Activated CD8-positive, alpha-beta memory T cell treated with anti-CD3 and anti-CD28 coated beads, Interleukin-2, amount 10 ng/mL, durations not matched to agents 7 days and 5 days (primary cell): ENCODE measurements at regions of chr6 and their contacts with region 1.

Region 1: DNA sequence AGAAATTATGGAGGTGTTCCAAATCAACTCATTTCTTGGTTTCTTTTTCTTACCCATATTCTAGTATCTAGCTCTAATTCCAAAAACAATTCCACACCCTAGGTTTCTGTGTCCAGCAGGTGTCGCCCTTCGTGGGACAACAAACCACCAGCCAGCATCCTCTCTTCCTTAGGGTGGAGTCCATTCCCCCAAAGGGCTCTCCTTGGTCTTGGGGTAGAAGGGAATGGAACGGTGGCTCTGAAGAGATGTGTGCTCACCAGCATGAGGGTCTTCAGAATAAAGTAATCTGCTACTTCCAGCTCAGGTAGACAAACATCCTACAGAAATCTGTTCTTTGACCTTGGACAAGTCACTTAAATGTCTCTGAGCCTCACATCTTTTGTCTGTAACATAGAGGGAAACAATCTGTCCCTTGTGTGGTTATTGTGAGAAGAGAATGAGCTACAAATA is 7.2 kb downstream of the HLA-DMB start:
- DNase-seq: peak; percentile 83
- ATAC-seq: peak; percentile 67
- H3K4me3 Mint-ChIP-seq: no peak overlapping the region
- H3K27ac Mint-ChIP-seq: no peak overlapping the region
- H3K4me1 Mint-ChIP-seq: peaks cover 23% of the 10 kb centered on the region
- H3K27me3 Mint-ChIP-seq: no peaks in the 10 kb centered on the region

Region 2: GRCh38 chr6:32609731-32610640 is 323.7 kb before region 1 on chr6:
- CTCF ChIA-PET with region 1: no interaction called
- DNase-seq: peak; percentile 72
- ATAC-seq: peak; percentile 98
- H3K4me3 Mint-ChIP-seq: no peak overlapping the region
- H3K27ac Mint-ChIP-seq: no peak overlapping the region
- H3K4me1 Mint-ChIP-seq: peaks cover 21% of the 10 kb centered on the region
- H3K27me3 Mint-ChIP-seq: no peaks in the 10 kb centered on the region

Region 3: GRCh38 chr6:32894080-32895005 is 39.3 kb before region 1 on chr6:
- CTCF ChIA-PET with region 1: interaction called, 17 read pairs
- DNase-seq: peak; percentile 96
- ATAC-seq: peak; percentile 99
- H3K4me3 Mint-ChIP-seq: peak overlapping the region; percentile 99
- H3K27ac Mint-ChIP-seq: peak overlapping the region; percentile 94
- H3K4me1 Mint-ChIP-seq: peaks cover 37% of the 10 kb centered on the region
- H3K27me3 Mint-ChIP-seq: peaks cover 4% of the 10 kb centered on the region

Region 4: DNA sequence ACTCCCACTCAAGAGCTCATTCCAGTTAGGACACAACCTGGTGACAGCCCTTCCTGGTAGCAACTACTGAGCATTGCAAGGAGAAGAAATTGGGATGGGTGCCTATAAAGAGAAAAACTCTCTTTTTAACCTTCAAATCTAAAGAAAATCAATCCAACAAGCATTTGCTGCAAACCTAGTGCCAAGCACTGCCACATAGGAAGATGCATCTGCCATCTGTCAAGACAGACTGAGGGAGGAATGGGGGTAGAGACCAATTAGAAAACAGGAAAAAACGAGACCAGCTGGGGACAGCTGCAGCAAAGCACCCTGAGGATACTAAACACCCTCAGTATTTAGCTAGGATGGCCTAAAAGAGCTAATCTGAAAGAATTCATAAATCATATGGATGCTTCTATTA is 20.7 kb before region 1 on chr6:
- CTCF ChIA-PET with region 1: interaction called, 22 read pairs
- DNase-seq: no peak
- ATAC-seq: no peak
- H3K4me3 Mint-ChIP-seq: no peak overlapping the region
- H3K27ac Mint-ChIP-seq: no peak overlapping the region
- H3K4me1 Mint-ChIP-seq: peaks cover 5% of the 10 kb centered on the region
- H3K27me3 Mint-ChIP-seq: peaks cover 34% of the 10 kb centered on the region

Region 5: GRCh38 chr6:32920715-32921114 is 12.9 kb before region 1 on chr6:
- CTCF ChIA-PET with region 1: interaction called, 26 read pairs
- DNase-seq: no peak
- ATAC-seq: no peak
- H3K4me3 Mint-ChIP-seq: no peak overlapping the region
- H3K27ac Mint-ChIP-seq: no peak overlapping the region
- H3K4me1 Mint-ChIP-seq: peaks cover 5% of the 10 kb centered on the region
- H3K27me3 Mint-ChIP-seq: peaks cover 32% of the 10 kb centered on the region

Region 6: DNA sequence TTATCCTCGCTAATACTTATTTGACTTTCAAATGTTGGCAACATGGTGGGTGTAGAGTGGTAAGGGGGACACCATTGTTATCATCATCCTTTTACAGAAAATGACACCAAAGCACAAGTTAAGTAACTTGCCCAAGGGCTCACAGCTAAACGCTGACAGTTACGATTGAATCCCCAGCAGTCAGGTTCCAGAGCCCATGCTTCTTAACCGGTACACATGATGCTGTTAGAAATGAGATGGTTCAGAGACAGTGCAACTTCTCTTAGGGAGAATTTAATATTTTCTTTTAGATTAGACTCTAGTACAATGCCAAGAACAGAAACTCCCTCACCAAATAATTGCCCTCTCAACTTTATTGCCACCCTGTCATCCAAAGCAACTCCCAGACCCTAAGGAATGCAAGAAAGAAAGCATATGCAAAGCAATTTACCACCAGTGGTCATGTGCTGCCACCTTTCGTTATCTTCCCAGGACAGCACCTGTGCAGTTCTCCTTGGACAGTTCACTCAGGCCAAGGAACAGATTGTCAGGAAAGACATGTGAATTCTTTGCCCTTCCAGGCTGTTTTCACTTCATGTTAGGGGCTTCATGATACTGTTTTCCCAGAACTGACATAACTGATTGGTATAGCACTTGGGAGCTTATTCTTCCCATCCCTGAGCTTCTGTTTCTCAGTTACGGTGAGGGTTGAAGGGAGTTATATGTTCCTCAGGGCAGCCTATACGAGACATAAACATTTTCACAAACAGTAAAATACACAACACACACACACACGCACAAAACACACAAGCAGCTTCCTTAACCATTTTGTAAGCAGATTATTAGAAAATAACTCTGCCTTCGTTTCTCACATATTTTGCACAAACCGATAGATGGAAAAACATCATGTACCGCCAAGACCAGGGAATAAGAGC is 14.1 kb after region 1 on chr6:
- CTCF ChIA-PET with region 1: interaction called, 133 read pairs
- DNase-seq: peak; percentile 57
- ATAC-seq: no peak
- H3K4me3 Mint-ChIP-seq: no peak overlapping the region
- H3K27ac Mint-ChIP-seq: no peak overlapping the region
- H3K4me1 Mint-ChIP-seq: peaks cover 63% of the 10 kb centered on the region
- H3K27me3 Mint-ChIP-seq: no peaks in the 10 kb centered on the region

Region 7: DNA sequence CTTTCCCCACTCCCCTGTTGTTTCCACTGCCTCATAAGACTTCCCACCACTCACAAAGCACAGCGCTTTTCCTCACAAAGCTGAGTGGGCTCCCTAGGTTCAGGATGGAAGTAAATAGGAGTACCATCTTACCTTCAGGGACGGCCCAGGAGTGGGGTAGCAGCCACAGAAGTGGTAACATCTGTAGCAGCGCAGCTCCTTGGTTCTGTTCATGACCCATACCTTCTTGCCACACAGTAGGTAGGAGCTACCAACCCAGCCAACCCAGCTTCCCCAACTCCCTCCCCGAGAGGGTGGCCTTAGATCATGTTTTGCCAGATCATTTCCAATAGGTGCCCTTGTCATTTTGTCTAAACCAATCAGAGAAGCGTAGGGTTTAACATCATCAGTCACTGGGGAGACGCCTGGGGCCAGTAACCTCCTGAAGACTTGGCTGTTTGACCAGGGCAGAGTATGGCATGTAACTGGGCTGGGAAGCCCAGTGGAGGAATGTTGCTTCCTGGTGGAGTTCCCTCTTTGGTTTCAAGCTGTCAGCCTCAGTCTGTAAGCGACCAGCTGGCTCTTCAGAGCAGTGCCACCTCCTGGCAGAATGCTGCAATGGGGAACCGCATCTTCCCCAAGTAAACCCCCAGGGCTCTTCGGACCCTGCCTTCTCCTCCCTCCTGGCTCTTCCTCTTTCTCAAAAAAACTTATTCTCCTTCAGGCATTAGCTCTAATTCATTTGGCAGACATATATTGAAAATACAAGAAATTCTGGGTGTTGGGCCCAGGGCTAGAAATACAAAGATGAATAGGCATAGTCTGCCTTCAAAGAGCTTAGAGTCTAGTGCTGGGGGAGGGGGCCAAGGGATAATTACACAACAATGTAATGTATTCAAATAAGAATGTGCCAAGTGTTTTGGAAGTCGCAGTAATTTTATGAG is 19.4 kb after region 1 on chr6 and contains the start of gene HLA-DMA:
- CTCF ChIA-PET with region 1: interaction called, 133 read pairs
- DNase-seq: peak; percentile 88
- ATAC-seq: peak; percentile 98
- H3K4me3 Mint-ChIP-seq: peak within 1 kb of the TSS; percentile 79
- H3K27ac Mint-ChIP-seq: peak within 1 kb of the TSS; percentile 86
- H3K4me1 Mint-ChIP-seq: peaks cover 59% of the 10 kb centered on the region
- H3K27me3 Mint-ChIP-seq: no peaks in the 10 kb centered on the region
- total RNA-seq, gene HLA-DMA: 57.9 to 60.9 TPM

Region 8: GRCh38 chr6:33049323-33050013 is 115.8 kb after region 1 on chr6:
- CTCF ChIA-PET with region 1: no interaction called
- DNase-seq: no peak
- ATAC-seq: peak; percentile 33
- H3K4me3 Mint-ChIP-seq: no peak overlapping the region
- H3K27ac Mint-ChIP-seq: no peak overlapping the region
- H3K4me1 Mint-ChIP-seq: no peaks in the 10 kb centered on the region
- H3K27me3 Mint-ChIP-seq: peaks cover 84% of the 10 kb centered on the region